CD14-positive monocyte (primary cell): ENCODE measurements at regions of chr19 and their contacts with region 1.

Region 1: DNA sequence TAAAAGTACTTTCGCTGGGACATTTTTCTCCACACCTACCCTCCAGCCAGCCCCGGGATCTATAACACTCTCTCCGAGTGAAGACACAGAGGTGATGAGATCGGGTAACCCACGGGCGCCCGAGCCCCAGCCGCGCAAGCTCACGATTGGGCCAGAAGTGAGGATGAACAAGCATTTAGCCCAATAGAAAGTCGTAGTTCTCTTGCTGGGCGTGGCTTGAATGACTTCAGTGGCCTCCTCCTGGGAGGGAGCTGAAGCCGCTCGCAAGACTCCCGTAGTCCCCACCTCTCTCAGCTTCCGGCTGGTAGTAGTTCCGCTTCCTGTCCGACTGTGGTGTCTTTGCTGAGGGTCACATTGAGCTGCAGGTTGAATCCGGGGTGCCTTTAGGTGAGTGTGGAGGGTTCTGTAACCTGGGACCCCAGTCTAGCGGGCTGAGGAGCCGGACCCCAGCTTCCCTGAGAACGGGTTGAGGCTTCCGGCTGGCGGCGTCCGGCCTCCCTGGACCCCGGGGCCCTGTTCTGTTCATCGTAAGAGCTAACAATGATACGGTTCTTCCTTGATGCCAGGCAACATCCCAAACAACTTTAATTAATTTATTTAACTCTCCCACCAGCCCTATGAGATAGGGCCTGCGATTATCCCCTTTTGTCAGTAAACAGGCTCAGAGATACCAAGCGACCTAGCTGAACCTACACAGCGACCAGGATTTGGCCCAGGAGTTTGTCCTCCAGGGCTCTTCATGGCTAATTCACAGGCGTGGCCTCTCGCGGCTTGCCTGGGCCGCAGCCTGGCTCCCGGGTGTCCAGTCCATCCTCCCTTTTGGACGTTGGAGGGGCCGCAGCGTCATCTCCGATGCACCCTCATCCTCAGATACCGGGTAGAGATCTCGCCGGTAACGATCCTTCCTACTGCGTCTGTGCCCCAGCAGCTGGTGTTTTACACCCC is at the start of gene COX6B1:
- DNase-seq: peak; percentile 95 to 98 (median 96)
- H3K4me3 ChIP-seq: peak within 1 kb of the TSS; percentile 58 to 91 (median 66)
- H3K4me3 Mint-ChIP-seq: peak within 1 kb of the TSS; percentile 96 to 97
- H3K27ac ChIP-seq: peak within 1 kb of the TSS; percentile 63 to 91
- H3K27ac Mint-ChIP-seq: peak within 1 kb of the TSS; percentile 90 to 97 (median 93)
- H3K4me1 ChIP-seq: peaks cover 35 to 45% of the 10 kb centered on the region in 2 donors
- H3K4me1 Mint-ChIP-seq: peaks cover 39% of the 10 kb centered on the region
- H3K27me3 ChIP-seq: no peaks in the 10 kb centered on the region
- H3K27me3 Mint-ChIP-seq: peaks cover 0 to 1% (median 0%) of the 10 kb centered on the region in 3 donors
- CTCF ChIP-seq: no peak
- polyA plus RNA-seq, gene COX6B1: 611 to 948 (median 825) TPM

Region 2: DNA sequence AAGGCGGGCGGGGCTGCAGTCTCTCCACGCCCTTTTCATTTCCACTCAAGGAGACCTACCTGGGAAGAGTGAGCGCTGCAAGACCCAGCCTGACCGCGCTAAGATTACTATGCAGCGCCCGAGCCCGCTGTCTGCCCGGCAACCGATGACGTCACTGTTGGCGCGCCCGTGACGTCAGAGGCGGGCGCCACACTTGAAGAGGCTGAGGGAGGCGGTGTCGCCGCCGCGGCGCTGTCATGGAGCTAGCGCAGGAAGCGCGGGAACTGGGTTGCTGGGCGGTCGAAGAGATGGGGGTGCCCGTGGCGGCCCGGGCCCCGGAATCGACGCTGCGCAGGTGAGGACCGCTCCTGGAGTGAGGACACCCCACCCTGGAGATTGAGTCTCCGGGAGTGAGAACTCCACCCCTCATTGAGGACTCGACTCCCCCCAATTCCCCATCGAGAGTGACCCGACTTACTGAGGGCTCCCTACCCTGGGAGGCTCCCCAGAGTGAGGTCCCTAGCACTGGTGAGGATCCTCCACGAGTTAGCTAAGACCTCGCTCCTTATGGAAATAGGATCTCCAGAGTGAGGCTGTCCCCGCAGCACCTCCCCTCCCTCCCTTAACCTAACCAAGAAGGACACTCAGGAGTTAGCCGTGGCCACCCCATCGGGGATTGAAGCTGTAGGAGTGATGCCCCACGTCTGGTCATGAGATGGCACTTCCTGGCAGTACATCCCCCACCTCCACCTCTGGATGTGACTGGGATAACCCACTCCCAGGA is 35.5 kb before region 1 on chr19 and contains the start of gene HAUS5:
- intact Hi-C with region 1: loop called in 1 of 2 experiments (anchors 5 kb)
- DNase-seq: peak; percentile 87 to 94 (median 93)
- H3K4me3 ChIP-seq: peak within 1 kb of the TSS; percentile 72 to 96 (median 83)
- H3K4me3 Mint-ChIP-seq: peak within 1 kb of the TSS; percentile 76
- H3K27ac ChIP-seq: peak within 1 kb of the TSS; percentile 7 to 73
- H3K27ac Mint-ChIP-seq: peak within 1 kb of the TSS; percentile 41 to 87 (median 75)
- H3K4me1 ChIP-seq: peaks cover 30 to 35% of the 10 kb centered on the region in 2 donors
- H3K4me1 Mint-ChIP-seq: peaks cover 30% of the 10 kb centered on the region
- H3K27me3 ChIP-seq: no peaks in the 10 kb centered on the region
- H3K27me3 Mint-ChIP-seq: peaks cover 0 to 6% (median 2%) of the 10 kb centered on the region in 3 donors
- CTCF ChIP-seq: no peak
- polyA plus RNA-seq, gene HAUS5: 0.94 to 6.3 (median 0.99) TPM

Region 3: GRCh38 chr19:35755517-35756376 is 107.5 kb after region 1 on chr19:
- intact Hi-C with region 1: no loop called
- DNase-seq: peak in 1 of 3 donors; percentile 13
- H3K4me3 ChIP-seq: peak overlapping the region in 1 of 3 experiments; percentile 100
- H3K4me3 Mint-ChIP-seq: peak overlapping the region; percentile 56 to 88
- H3K27ac ChIP-seq: no peak overlapping the region
- H3K27ac Mint-ChIP-seq: no peak overlapping the region
- H3K4me1 ChIP-seq: peaks cover 29 to 41% of the 10 kb centered on the region in 2 donors
- H3K4me1 Mint-ChIP-seq: peaks cover 32% of the 10 kb centered on the region
- H3K27me3 ChIP-seq: peaks cover 9 to 21% of the 10 kb centered on the region in 2 donors
- H3K27me3 Mint-ChIP-seq: peaks cover 18 to 30% (median 25%) of the 10 kb centered on the region in 3 donors
- CTCF ChIP-seq: no peak

Region 4: DNA sequence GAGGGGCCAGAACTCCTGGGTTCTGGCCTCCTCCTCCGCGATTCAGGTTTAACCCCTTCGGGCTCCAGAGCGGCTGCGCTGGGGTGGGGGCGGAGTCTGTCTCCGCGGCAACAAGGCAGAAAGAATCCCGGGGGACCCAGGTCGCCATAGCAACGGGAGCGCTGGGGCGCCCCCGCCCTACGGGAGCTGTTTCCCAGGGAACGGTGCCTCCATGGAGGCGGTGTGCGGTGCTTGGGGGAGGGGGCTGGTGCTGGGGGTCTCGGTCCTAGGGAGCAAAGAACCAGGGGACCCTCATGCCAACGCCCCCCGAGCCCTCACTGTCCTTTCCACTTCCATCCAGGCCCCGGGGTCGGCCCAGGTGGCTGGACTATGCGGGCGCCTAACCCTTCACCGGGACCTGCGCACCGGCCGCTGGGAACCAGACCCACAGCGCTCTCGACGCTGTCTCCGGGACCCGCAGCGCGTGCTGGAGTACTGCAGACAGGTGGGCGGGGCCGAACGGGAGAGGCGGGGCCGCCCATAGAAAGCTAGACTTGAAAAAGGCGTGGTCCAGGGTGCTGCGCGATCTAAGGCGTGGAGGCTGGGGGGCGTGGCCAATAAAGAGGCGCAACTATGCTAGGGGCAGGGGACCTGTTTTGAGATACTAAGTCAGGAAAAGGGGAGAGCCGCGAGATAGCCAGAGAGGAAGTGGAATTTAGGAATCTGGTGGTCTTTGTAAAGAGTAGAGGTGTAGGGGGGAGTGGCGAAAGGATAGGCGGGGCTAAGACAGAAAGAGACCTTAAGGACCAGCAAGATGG is 221.2 kb after region 1 on chr19:
- intact Hi-C with region 1: no loop called
- DNase-seq: peak; percentile 54 to 62 (median 57)
- H3K4me3 ChIP-seq: peak overlapping the region in 1 of 3 experiments; percentile 52
- H3K4me3 Mint-ChIP-seq: peak overlapping the region; percentile 50 to 78
- H3K27ac ChIP-seq: no peak overlapping the region
- H3K27ac Mint-ChIP-seq: peak overlapping the region in 1 of 7 donors; percentile 1
- H3K4me1 ChIP-seq: peaks cover 16 to 23% of the 10 kb centered on the region in 2 donors
- H3K4me1 Mint-ChIP-seq: peaks cover 15% of the 10 kb centered on the region
- H3K27me3 ChIP-seq: peaks cover 27 to 52% of the 10 kb centered on the region in 2 donors
- H3K27me3 Mint-ChIP-seq: peaks cover 47 to 70% (median 54%) of the 10 kb centered on the region in 3 donors
- CTCF ChIP-seq: no peak